Endothelial cell of umbilical vein (primary cell): ENCODE measurements at regions of chr19 and their contacts with region 1.

Region 1: GRCh38 chr19:56988299-56988698 is 131.5 kb upstream of the USP29 start:
- DNase-seq: no peak
- H3K4me3 ChIP-seq: no peak overlapping the region
- H3K27ac ChIP-seq: no peak overlapping the region
- H3K4me1 ChIP-seq: no peaks in the 10 kb centered on the region
- H3K27me3 ChIP-seq: no peaks in the 10 kb centered on the region
- CTCF ChIP-seq: no peak
- POLR2A ChIP-seq: no peak

Region 2: GRCh38 chr19:56959210-56959609 is 29.1 kb before region 1 on chr19:
- CTCF ChIA-PET with region 1: no interaction called
- POLR2A ChIA-PET with region 1: no interaction called
- dilution Hi-C with region 1: no loop called
- intact Hi-C with region 1: loop called (anchors 2 kb)
- DNase-seq: no peak
- H3K4me3 ChIP-seq: no peak overlapping the region
- H3K27ac ChIP-seq: no peak overlapping the region
- H3K4me1 ChIP-seq: no peaks in the 10 kb centered on the region
- H3K27me3 ChIP-seq: no peaks in the 10 kb centered on the region
- CTCF ChIP-seq: no peak
- POLR2A ChIP-seq: no peak

Region 3: GRCh38 chr19:57057036-57057686 is 68.9 kb after region 1 on chr19:
- CTCF ChIA-PET with region 1: no interaction called
- POLR2A ChIA-PET with region 1: no interaction called
- dilution Hi-C with region 1: no loop called
- intact Hi-C with region 1: no loop called
- DNase-seq: no peak
- H3K4me3 ChIP-seq: no peak overlapping the region
- H3K27ac ChIP-seq: no peak overlapping the region
- H3K4me1 ChIP-seq: no peaks in the 10 kb centered on the region
- H3K27me3 ChIP-seq: no peaks in the 10 kb centered on the region
- CTCF ChIP-seq: no peak
- POLR2A ChIP-seq: no peak

Region 4: DNA sequence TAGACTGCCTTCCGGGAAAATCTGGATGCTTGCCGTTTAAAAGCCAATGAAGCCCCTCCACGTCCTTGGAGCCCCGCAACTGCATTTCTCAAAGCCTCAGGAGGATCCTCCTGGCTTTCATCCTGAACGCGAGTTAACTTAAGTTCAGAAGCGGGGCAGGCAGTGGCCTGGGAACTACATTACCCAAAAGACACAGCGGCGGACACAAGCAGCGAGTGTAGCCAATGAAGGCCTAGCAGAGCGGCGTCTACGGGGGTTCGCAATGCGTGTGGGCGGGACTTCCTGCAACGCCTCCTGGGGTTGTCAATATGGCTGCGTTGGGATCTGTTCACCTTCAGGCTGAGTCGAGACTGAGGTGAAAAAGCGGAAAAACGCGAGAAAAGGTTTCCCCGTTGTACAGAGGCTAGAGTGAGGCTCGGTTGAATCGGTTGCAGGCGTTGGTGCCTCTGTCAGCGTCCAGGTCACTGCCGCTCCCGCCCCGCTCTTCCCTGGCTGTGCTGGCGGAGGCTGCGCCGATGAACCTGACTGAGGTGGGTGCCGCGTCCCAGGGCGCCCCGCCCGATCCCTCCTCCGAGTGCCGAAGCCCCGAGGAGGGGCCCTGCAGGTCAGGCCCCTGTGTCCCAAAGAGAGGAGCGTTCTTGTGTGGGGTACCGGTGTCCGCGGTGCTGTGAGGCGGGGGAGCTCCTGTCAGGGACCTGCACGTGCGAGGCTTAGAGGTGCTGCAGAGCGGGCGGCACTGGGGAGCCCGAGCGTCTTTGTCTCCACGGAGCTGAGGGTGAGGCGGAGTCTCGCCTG is 422.8 kb after region 1 on chr19 and contains the start of gene ZNF17:
- CTCF ChIA-PET with region 1: no interaction called
- POLR2A ChIA-PET with region 1: no interaction called
- dilution Hi-C with region 1: no loop called
- intact Hi-C with region 1: no loop called
- DNase-seq: peak; percentile 95
- H3K4me3 ChIP-seq: peak within 1 kb of the TSS; percentile 91 to 99 (median 97)
- H3K27ac ChIP-seq: no peak within 1 kb of the TSS
- H3K4me1 ChIP-seq: peaks cover 8% of the 10 kb centered on the region
- H3K27me3 ChIP-seq: no peaks in the 10 kb centered on the region
- CTCF ChIP-seq: no peak
- POLR2A ChIP-seq: no peak
- total RNA-seq, gene ZNF17: 4.7 and 6.4 TPM in 2 replicates